CD8-positive, alpha-beta T cell (primary cell): ENCODE measurements at regions of chr12 and their contacts with region 1.

Region 1: GRCh38 chr12:29317556-29318363 is 63.2 kb downstream of the ERGIC2 start:
- DNase-seq: peak in 8 of 9 experiments; percentile 3 to 79 (median 39)
- ATAC-seq: peak; percentile 98
- H3K4me3 ChIP-seq: no peak overlapping the region
- H3K4me3 Mint-ChIP-seq: no peak overlapping the region
- H3K27ac ChIP-seq: no peak overlapping the region
- H3K27ac Mint-ChIP-seq: no peak overlapping the region
- H3K4me1 ChIP-seq: no peaks in the 10 kb centered on the region
- H3K4me1 Mint-ChIP-seq: peaks cover 8% of the 10 kb centered on the region
- H3K27me3 ChIP-seq: no peaks in the 10 kb centered on the region
- H3K27me3 Mint-ChIP-seq: no peaks in the 10 kb centered on the region
- CTCF ChIP-seq: peak; percentile 75

Region 2: DNA sequence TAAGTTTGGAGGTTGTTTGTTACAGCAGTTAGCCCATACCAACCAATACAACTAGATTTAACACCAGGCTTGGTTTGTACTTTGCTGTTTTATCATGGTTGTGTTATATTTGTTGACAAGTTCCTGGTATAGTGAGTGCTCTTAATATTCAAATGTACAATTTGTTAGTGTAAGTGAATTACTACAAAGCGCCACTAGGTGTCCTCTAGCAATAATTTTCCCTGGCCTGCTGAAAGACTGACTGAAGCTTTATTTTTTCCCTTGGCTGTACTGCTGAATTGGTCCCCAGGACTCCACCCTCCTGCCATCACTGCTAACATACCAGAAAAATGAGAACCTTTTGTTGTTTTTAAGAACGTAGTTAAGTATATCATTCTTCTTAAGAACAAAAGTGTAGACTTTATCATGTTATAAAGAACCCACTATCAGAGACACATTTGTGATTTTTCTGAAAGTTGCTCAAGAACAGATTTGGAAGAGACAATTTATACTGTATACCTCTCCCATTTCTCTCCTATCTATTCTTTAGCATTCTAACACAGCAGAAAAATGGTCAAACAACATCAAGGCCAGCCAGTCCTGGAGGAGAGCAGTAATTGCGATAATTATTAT is 244.0 kb before region 1 on chr12:
- CTCF ChIA-PET with region 1: interaction called, 65 read pairs
- POLR2A ChIA-PET with region 1: no interaction called
- intact Hi-C with region 1: loop called (anchors 1 to 2 kb)
- DNase-seq: peak in 3 of 9 experiments; percentile 1 to 58 (median 47)
- ATAC-seq: peak; percentile 64
- H3K4me3 ChIP-seq: no peak overlapping the region
- H3K4me3 Mint-ChIP-seq: no peak overlapping the region
- H3K27ac ChIP-seq: no peak overlapping the region
- H3K27ac Mint-ChIP-seq: no peak overlapping the region
- H3K4me1 ChIP-seq: no peaks in the 10 kb centered on the region
- H3K4me1 Mint-ChIP-seq: no peaks in the 10 kb centered on the region
- H3K27me3 ChIP-seq: peaks cover 3% of the 10 kb centered on the region in 2 experiments
- H3K27me3 Mint-ChIP-seq: peaks cover 20% of the 10 kb centered on the region
- CTCF ChIP-seq: peak; percentile 84

Region 3: DNA sequence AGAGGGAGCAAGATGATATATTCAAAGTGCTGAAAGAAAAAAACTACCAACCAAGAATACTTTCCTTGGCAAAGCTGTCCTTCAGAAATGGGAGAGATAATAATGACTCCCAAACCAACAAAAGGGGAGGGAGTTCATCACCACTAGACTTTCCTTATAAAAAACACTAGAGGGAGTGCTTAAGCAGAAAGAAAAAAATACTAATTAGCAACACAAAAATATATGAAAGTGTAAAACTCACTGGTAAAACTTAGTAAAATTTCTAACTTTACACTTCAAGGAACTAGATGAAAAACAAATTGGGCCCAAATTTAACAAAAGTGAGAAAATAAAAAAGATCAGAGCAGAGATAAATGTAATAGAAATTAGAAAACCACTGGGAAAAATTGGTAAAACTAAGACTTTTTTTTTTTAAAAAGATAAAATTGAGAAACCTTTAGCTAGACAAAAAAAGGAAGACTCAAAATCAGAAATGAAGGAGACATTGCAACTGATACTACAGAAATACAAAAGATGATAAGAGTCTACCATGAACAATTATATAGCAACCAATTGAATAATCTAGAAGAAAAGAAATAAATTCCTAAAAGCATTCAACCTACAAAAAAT is 229.0 kb before region 1 on chr12:
- CTCF ChIA-PET with region 1: interaction called, 51 read pairs
- POLR2A ChIA-PET with region 1: no interaction called
- intact Hi-C with region 1: loop called (anchors 1 to 5 kb)
- DNase-seq: peak in 2 of 9 experiments; percentile 12 to 39
- ATAC-seq: peak; percentile 36
- H3K4me3 ChIP-seq: no peak overlapping the region
- H3K4me3 Mint-ChIP-seq: no peak overlapping the region
- H3K27ac ChIP-seq: no peak overlapping the region
- H3K27ac Mint-ChIP-seq: no peak overlapping the region
- H3K4me1 ChIP-seq: no peaks in the 10 kb centered on the region
- H3K4me1 Mint-ChIP-seq: peaks cover 2% of the 10 kb centered on the region
- H3K27me3 ChIP-seq: no peaks in the 10 kb centered on the region
- H3K27me3 Mint-ChIP-seq: no peaks in the 10 kb centered on the region
- CTCF ChIP-seq: peak; percentile 64

Region 4: GRCh38 chr12:29304388-29304787 is 13.4 kb before region 1 on chr12:
- CTCF ChIA-PET with region 1: interaction called, 25 read pairs
- POLR2A ChIA-PET with region 1: no interaction called
- intact Hi-C with region 1: no loop called
- DNase-seq: no peak
- ATAC-seq: no peak
- H3K4me3 ChIP-seq: no peak overlapping the region
- H3K4me3 Mint-ChIP-seq: no peak overlapping the region
- H3K27ac ChIP-seq: no peak overlapping the region
- H3K27ac Mint-ChIP-seq: no peak overlapping the region
- H3K4me1 ChIP-seq: no peaks in the 10 kb centered on the region
- H3K4me1 Mint-ChIP-seq: no peaks in the 10 kb centered on the region
- H3K27me3 ChIP-seq: no peaks in the 10 kb centered on the region
- H3K27me3 Mint-ChIP-seq: no peaks in the 10 kb centered on the region
- CTCF ChIP-seq: no peak